ENCODE measurements at regions of chr1 and their contacts with region 1.

Region 1: DNA sequence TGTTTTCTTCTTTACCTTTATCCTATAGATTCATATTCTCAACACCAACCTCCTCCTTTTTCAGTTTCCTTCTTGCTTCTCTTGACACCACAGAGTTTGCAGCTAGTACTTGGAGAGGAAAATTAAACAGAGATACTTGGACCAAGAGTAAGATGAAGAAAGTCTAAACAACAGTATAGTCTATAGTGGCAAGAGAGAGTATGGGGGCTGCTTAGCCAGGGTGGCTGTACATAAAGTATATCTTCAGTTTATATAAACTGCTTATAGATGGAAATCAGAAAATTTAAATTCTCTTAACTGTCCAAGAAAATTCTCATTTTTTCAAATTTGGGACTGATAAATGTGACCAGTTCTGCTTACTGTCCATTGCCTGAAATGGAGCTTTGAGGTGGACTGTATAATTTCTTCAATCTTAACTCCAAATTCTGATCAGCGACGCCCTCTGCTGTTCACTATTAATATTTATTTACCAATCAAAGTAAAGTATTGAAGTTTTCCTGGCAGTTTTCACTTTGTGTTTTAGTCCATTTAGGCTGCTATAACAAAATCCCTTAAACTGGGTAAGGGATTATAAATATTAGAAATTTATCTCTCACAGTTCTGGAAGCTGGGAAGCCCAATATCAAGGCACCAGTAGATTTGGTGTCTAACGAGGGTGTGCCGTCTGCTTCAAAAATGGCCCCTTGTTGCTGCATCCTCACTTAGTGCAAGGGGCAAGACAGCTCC is 14.8 kb upstream of the METTL18 start:
- DNase-seq: peak; percentile 52
- H3K4me3 ChIP-seq: no peak overlapping the region
- H3K27ac ChIP-seq: no peak overlapping the region
- H3K4me1 ChIP-seq: no peaks in the 10 kb centered on the region
- CTCF ChIP-seq: peak; percentile 89

Region 2: DNA sequence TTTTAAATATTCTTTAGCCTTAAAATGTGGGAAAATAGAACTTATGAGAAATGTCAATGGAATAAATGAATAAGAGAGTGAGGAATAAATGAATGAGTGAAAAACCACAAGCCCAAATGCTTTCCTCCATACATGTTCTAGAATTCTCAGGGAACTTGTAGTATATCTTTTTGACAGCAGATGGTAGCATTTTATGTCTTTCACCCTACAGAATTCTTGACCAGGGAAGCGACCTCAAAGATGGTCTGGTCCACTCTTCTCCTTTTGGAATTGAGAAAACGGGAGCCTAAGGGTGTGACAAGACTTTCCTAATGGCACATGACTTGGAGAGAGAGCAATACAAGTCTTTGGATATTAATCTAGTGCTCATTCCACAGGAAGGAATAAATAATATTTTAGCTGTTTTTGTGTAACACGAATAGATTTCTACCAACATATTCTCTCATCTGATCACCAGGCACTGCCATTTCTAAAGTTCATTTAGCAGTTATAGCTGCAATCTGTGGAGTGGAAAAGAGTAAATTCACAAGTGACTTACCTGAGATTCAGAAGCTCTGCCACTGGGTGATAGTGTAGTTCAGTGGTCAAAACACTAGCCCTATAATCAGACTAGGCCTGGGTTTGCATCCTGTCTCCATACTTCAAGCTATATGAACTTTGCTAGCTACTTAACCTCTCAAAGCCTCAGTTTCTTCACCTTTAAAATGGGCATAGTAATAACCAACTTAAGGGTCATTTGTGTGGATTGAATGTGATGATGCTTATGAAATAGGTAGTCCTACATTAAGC is 208.2 kb before region 1 on chr1:
- CTCF ChIA-PET with region 1: no interaction called
- POLR2A ChIA-PET with region 1: no interaction called
- intact Hi-C with region 1: loop called (anchors 2 kb)
- DNase-seq: peak; percentile 43
- H3K4me3 ChIP-seq: no peak overlapping the region
- H3K27ac ChIP-seq: no peak overlapping the region
- H3K4me1 ChIP-seq: no peaks in the 10 kb centered on the region
- CTCF ChIP-seq: peak; percentile 78

Region 3: DNA sequence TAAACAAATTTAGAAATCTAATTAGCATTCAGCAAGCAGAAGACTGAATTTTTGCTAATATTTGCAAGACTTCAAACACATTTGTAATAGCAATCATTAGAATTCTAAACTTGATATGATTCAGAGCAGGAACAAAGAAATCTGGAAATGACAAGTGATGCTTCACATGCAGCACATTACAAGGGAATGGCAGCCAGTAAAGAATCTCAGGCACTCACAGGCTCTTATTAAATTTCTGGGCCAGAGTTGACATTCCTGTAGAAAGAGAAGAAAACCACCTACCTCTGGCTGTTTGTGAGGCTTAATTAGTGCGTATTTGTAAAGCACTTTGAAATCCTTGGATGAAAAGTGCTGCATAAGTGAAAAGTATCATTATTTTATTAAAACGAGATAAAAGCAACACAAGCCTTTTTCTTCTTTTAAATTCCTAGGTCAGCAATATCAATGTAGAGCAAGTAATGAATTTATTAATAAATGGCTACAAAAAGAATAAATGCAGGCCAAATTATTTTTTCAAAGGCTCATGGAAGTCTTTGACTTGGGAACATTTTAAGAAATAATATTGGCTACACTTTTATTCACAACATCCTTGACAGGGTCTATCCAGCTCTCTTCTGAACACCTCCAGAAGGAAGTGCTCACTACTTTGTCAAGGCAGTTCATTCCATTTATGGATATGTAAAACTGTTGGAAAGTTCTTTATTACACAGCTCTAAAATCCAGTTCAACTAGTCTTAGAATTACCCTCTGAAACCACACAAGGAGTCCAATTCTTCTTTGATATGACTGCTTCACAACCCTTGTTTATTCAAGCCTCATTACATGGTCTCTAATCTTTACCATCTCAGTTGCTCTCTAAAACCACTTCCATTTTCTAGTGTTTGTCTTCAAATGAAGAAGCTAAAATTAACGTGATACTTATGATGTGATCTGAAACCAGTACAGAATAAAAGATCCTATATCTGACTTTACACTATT is 116.3 kb after region 1 on chr1:
- CTCF ChIA-PET with region 1: no interaction called
- POLR2A ChIA-PET with region 1: no interaction called
- intact Hi-C with region 1: no loop called
- DNase-seq: no peak
- H3K4me3 ChIP-seq: no peak overlapping the region
- H3K27ac ChIP-seq: no peak overlapping the region
- H3K4me1 ChIP-seq: no peaks in the 10 kb centered on the region
- CTCF ChIP-seq: no peak